Cardiac septum (tissue), 1 donor: ENCODE measurements at regions of chr3 and their contacts with region 1.

Region 1: DNA sequence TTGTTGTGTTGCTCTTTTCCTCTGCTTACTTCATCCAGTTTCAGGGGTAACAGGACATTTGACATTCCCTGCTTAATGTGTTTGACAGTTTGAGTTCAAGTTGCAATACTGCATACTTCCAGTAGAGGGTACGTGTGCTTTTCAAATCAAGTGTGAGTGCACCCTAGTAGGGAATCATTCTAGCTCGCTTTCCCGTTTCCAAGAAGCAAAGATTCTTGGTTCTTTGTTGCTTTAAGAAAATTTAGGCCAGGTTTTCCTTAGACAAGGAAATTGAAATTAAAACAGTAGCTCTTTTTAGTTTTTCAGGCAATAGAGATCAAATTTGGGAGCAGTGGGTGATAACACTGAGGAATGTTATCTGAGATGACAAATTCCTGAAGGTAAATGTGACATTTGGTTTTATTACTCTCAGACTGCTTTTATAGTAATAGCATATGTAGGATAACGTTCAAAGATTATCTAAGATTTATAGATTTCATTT is 73.2 kb downstream of the SYNPR start:
- DNase-seq: no peak

Region 2: GRCh38 chr3:63467409-63467808 is 116.1 kb after region 1 on chr3:
- intact Hi-C with region 1: no loop called
- DNase-seq: no peak

Region 3: DNA sequence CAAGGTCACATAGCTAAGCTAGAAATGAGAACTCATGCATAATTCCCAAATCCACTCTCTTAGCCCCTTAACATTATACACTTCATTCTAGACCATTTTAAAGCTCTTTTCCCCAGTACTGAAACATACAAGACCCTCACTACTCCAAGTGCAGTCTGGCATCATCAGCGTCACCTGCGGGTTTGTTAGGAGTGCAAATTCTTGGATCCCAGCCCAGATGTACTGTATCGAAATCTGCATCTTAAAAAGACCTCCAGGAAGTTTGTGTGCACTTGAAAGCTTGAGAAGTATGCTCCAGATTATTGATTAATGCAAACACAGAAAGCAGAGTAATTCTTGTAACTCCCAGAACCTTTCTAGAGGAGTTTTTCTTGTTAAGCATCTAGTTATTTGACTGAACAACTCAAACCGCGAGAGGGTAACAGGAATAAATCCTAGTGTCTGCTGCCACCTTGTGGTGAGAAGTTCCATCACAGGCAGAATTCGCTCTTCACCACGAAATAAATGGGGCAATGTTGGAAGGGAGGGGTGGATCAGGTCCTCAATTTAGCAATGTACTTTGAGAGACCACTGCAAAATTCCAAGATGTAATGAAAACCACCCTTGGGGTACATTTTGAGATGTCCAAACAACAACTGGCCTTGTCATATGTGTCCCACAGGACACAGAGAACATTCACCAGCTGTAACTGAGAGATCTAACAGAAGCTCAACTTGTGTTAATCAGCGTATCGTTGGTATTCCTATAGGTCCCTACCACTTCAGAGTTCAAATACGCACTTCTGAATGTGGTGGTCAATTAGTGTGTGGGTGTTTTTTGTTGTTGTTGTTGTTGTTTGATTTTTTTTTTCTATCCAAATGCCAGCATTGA is 467.2 kb after region 1 on chr3:
- intact Hi-C with region 1: loop called (anchors 1 kb)
- DNase-seq: no peak